Activated CD4-positive, alpha-beta memory T cell treated with anti-CD3 and anti-CD28 coated beads, Interleukin-2, amount 10 ng/mL, durations not matched to agents 7 days and 5 days (primary cell): ENCODE measurements at regions of chr12 and their contacts with region 1.

Region 1: GRCh38 chr12:6944381-6945186 is 762 bp downstream of the C12orf57 start:
- DNase-seq: peak; percentile 91
- H3K4me3 Mint-ChIP-seq: peak overlapping the region; percentile 86
- H3K27ac Mint-ChIP-seq: peak overlapping the region; percentile 93
- H3K4me1 Mint-ChIP-seq: peaks cover 59% of the 10 kb centered on the region
- H3K27me3 Mint-ChIP-seq: no peaks in the 10 kb centered on the region

Region 2: GRCh38 chr12:6716874-6717437 is 227.6 kb before region 1 on chr12:
- CTCF ChIA-PET with region 1: no interaction called
- POLR2A ChIA-PET with region 1: no interaction called
- DNase-seq: no peak
- H3K4me3 Mint-ChIP-seq: no peak overlapping the region
- H3K27ac Mint-ChIP-seq: no peak overlapping the region
- H3K4me1 Mint-ChIP-seq: peaks cover 2% of the 10 kb centered on the region
- H3K27me3 Mint-ChIP-seq: peaks cover 3% of the 10 kb centered on the region

Region 3: DNA sequence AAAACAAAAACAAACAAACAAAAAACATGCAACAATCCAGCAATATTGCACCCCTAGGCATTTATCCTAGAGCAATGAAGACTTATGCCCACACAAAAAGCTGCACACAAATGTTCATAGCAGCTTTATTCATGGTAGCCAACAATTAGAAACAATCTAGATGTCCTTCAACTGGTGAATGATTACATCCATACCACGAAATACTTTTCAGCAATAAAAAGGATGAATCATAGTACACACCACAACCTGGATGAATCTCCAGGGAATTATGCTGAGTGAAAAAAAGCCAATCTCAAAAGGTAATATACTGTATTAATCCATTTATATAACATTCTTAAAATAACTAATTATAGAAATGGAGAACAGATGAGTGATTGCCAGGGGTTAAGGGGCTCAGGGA is 137.4 kb before region 1 on chr12:
- CTCF ChIA-PET with region 1: no interaction called
- POLR2A ChIA-PET with region 1: no interaction called
- DNase-seq: no peak
- H3K4me3 Mint-ChIP-seq: no peak overlapping the region
- H3K27ac Mint-ChIP-seq: no peak overlapping the region
- H3K4me1 Mint-ChIP-seq: peaks cover 13% of the 10 kb centered on the region
- H3K27me3 Mint-ChIP-seq: no peaks in the 10 kb centered on the region

Region 4: DNA sequence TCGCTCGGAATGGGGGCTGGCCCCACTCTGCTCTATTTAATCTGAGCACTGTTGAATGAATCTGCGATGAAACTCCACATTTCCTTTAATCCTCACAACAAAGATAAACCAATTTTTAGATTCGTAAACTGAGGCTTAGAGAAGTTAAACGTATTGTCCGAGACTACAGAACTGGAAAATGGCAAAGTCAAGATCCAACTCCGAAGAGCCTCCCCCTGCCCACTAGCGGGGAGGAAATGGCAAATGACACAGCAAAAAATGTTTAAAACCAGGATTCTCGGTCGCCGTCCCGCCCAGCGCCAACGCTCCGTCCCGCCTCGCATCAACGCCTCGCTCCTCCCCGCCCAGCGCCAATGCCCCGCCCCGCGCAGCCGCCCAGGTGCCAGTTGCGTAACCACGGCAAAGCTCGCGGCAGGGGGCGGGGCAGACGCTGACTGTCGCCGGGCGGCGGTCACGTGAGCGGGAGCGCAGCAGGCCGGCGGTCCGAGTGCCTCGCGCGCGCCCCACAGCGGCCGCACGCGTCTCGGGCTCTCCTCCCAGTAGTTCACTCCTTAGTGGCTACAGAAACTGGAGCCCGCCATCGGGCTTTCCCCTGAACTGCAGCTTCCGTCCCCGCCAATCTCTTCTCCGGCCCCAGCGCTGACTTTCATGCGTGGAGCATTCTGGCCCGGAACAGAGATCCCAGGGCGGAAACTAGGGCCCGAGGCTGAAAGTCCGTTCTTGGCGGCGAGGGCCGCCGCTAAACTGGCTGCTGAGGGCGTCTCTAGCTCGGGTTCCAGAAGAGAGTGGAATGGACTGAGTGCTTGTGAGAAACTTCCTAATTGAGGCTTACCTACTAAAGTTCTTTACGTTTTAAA is 53.6 kb before region 1 on chr12:
- CTCF ChIA-PET with region 1: interaction called, 7 read pairs
- POLR2A ChIA-PET with region 1: interaction called, 30 read pairs
- DNase-seq: peak; percentile 99
- H3K4me3 Mint-ChIP-seq: peak overlapping the region; percentile 79
- H3K27ac Mint-ChIP-seq: peak overlapping the region; percentile 93
- H3K4me1 Mint-ChIP-seq: peaks cover 38% of the 10 kb centered on the region
- H3K27me3 Mint-ChIP-seq: no peaks in the 10 kb centered on the region

Region 5: GRCh38 chr12:6927379-6928024 is 17.1 kb before region 1 on chr12 and contains the start of gene ATN1:
- CTCF ChIA-PET with region 1: interaction called, 19 read pairs
- POLR2A ChIA-PET with region 1: interaction called, 295 read pairs
- DNase-seq: peak; percentile 48
- H3K4me3 Mint-ChIP-seq: peak within 1 kb of the TSS; percentile 90
- H3K27ac Mint-ChIP-seq: peak within 1 kb of the TSS; percentile 78
- H3K4me1 Mint-ChIP-seq: peaks cover 68% of the 10 kb centered on the region
- H3K27me3 Mint-ChIP-seq: no peaks in the 10 kb centered on the region
- total RNA-seq, gene ATN1: 33.9 to 34.6 TPM

Region 6: DNA sequence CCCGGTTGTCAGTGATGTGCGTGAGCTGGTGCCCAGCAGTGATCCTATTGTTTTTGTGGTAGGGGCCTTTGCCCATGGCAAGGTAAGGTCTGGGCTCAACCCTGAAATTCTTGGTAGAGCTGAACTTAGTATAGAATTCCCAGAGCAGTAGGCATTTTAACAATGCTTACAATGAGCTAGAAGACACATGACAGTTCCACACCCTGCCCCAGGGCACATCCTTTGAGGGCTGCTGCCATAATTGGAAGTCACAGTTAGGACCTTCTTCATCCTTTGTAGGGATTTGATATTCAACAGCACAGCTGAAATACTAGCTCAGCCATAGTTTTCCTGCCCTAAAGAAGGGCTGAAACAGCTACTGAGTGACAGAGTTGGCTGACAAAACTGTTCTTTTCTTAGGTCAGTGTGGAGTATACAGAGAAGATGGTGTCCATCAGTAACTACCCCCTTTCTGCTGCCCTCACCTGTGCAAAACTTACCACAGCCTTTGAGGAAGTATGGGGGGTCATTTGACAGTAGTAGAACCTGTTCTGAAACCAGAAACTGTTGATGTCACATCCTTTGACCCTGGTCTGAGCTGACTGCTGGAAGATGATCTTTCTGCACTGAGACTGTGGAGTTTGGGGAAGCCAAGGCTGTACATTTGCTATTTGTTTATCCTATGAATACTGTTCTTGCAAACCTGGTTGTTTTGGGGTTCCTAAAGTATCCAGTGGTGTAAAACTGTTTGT is 30.9 kb after region 1 on chr12:
- CTCF ChIA-PET with region 1: interaction called, 5 read pairs
- POLR2A ChIA-PET with region 1: interaction called, 118 read pairs
- DNase-seq: no peak
- H3K4me3 Mint-ChIP-seq: no peak overlapping the region
- H3K27ac Mint-ChIP-seq: no peak overlapping the region
- H3K4me1 Mint-ChIP-seq: peaks cover 42% of the 10 kb centered on the region
- H3K27me3 Mint-ChIP-seq: no peaks in the 10 kb centered on the region

Region 7: GRCh38 chr12:7092229-7092985 is 147.8 kb after region 1 on chr12 and contains the start of gene C1R:
- CTCF ChIA-PET with region 1: interaction called, 4 read pairs
- POLR2A ChIA-PET with region 1: interaction called, 26 read pairs
- DNase-seq: peak; percentile 75
- H3K4me3 Mint-ChIP-seq: peak within 1 kb of the TSS; percentile 71
- H3K27ac Mint-ChIP-seq: no peak within 1 kb of the TSS
- H3K4me1 Mint-ChIP-seq: peaks cover 8% of the 10 kb centered on the region
- H3K27me3 Mint-ChIP-seq: peaks cover 6% of the 10 kb centered on the region
- total RNA-seq, gene C1R: 2.7 to 3.8 TPM

Region 8: GRCh38 chr12:7129872-7130680 is 185.5 kb after region 1 on chr12 and contains the start of gene CLSTN3:
- CTCF ChIA-PET with region 1: interaction called, 3 read pairs
- POLR2A ChIA-PET with region 1: interaction called, 15 read pairs
- DNase-seq: peak; percentile 89
- H3K4me3 Mint-ChIP-seq: peak within 1 kb of the TSS; percentile 100
- H3K27ac Mint-ChIP-seq: peak within 1 kb of the TSS; percentile 91
- H3K4me1 Mint-ChIP-seq: peaks cover 43% of the 10 kb centered on the region
- H3K27me3 Mint-ChIP-seq: no peaks in the 10 kb centered on the region
- total RNA-seq, gene CLSTN3: 148 to 152 TPM